Activated B cell treated with CpG ODN at 0.5 μM for 24 hours (primary cell): ENCODE measurements at regions of chr5 and their contacts with region 1.

Region 1: GRCh38 chr5:173789031-173789920 is 98.9 kb upstream of the CPEB4 start:
- DNase-seq: no peak
- ATAC-seq: no peak
- H3K4me3 Mint-ChIP-seq: no peak overlapping the region
- H3K27ac Mint-ChIP-seq: no peak overlapping the region
- H3K4me1 Mint-ChIP-seq: peaks cover 34% of the 10 kb centered on the region
- H3K27me3 Mint-ChIP-seq: no peaks in the 10 kb centered on the region
- CTCF ChIP-seq: no peak

Region 2: GRCh38 chr5:173689737-173690360 is 99.4 kb before region 1 on chr5:
- CTCF ChIA-PET with region 1: interaction called, 3 read pairs
- POLR2A ChIA-PET with region 1: no interaction called
- intact Hi-C with region 1: loop called (anchors 5 kb)
- DNase-seq: no peak
- ATAC-seq: peak; percentile 80
- H3K4me3 Mint-ChIP-seq: peak overlapping the region; percentile 32
- H3K27ac Mint-ChIP-seq: peak overlapping the region; percentile 81
- H3K4me1 Mint-ChIP-seq: peaks cover 41% of the 10 kb centered on the region
- H3K27me3 Mint-ChIP-seq: no peaks in the 10 kb centered on the region
- CTCF ChIP-seq: no peak

Region 3: GRCh38 chr5:173733831-173734501 is 55.3 kb before region 1 on chr5:
- CTCF ChIA-PET with region 1: no interaction called
- POLR2A ChIA-PET with region 1: interaction called, 3 read pairs
- intact Hi-C with region 1: loop called (anchors 1 kb)
- DNase-seq: peak; percentile 41
- ATAC-seq: peak; percentile 79
- H3K4me3 Mint-ChIP-seq: peak overlapping the region; percentile 58
- H3K27ac Mint-ChIP-seq: peak overlapping the region; percentile 90
- H3K4me1 Mint-ChIP-seq: peaks cover 64% of the 10 kb centered on the region
- H3K27me3 Mint-ChIP-seq: no peaks in the 10 kb centered on the region
- CTCF ChIP-seq: no peak

Region 4: DNA sequence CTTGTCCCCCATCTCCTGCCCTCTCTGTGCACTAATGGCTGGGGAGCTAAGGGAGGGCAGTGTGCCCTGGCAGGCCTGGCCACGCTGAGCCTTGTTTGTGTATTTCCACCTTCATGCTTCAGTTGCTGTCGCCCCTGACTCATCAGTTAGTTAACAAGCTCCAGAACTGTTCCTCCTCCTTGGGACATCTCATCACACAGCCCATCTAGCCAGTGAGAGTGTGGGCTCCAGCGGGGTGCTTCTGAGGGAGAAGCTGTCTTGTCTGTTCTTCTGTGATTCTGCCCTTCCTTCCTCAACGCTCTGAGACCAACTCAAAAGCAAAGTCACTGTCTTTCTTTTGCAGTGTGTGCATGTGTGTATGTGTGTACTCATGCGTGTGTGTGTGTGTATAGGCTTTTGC is 40.5 kb after region 1 on chr5:
- CTCF ChIA-PET with region 1: no interaction called
- POLR2A ChIA-PET with region 1: interaction called, 8 read pairs
- intact Hi-C with region 1: loop called (anchors 1 kb)
- DNase-seq: no peak
- ATAC-seq: peak; percentile 47
- H3K4me3 Mint-ChIP-seq: no peak overlapping the region
- H3K27ac Mint-ChIP-seq: peak overlapping the region; percentile 43
- H3K4me1 Mint-ChIP-seq: peaks cover 84% of the 10 kb centered on the region
- H3K27me3 Mint-ChIP-seq: no peaks in the 10 kb centered on the region
- CTCF ChIP-seq: no peak

Region 5: DNA sequence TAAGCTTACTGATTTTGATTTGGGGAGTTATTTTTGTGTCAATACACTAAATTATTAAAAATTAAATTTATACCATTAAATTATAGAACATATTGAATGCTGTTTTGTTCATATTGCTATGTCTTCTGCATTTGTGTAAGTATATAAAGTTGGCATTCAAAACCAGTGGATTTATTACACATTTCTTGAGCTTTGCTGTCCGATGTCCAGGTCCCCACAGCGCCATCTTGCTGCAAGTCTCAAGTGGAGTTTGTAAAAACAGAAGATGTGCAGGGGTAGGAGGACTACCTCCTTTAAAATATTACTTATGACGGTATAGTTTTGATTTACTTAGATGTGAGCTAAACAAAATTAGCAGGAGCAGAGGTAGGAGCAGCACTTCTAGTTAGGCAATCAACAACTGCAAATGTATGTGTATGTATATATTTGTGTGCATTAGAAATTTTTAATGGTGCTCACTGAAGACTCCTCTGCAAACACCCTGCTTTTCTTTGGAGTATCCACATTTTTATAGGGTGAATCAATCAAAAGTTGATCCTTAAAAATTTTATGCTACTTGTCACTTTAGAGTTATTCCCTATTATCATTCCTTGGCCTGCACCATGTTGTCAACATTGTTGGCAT is 136.3 kb after region 1 on chr5:
- CTCF ChIA-PET with region 1: interaction called, 26 read pairs
- POLR2A ChIA-PET with region 1: interaction called, 3 read pairs
- intact Hi-C with region 1: no loop called
- DNase-seq: no peak
- ATAC-seq: peak; percentile 54
- H3K4me3 Mint-ChIP-seq: no peak overlapping the region
- H3K27ac Mint-ChIP-seq: no peak overlapping the region
- H3K4me1 Mint-ChIP-seq: peaks cover 25% of the 10 kb centered on the region
- H3K27me3 Mint-ChIP-seq: no peaks in the 10 kb centered on the region
- CTCF ChIP-seq: no peak

Region 6: GRCh38 chr5:173989432-173990082 is 200.3 kb after region 1 on chr5:
- CTCF ChIA-PET with region 1: no interaction called
- POLR2A ChIA-PET with region 1: no interaction called
- intact Hi-C with region 1: no loop called
- DNase-seq: no peak
- ATAC-seq: no peak
- H3K4me3 Mint-ChIP-seq: no peak overlapping the region
- H3K27ac Mint-ChIP-seq: no peak overlapping the region
- H3K4me1 Mint-ChIP-seq: no peaks in the 10 kb centered on the region
- H3K27me3 Mint-ChIP-seq: peaks cover 15% of the 10 kb centered on the region
- CTCF ChIP-seq: no peak